ENCODE measurements at regions of chr11 and their contacts with region 1.

Region 1: GRCh38 chr11:126303623-126304456 is at the start of gene DCPS:
- DNase-seq: peak; percentile 50 to 97
- H3K4me3 ChIP-seq: peak within 1 kb of the TSS; percentile 63 to 98 (median 86)
- H3K27ac ChIP-seq: peak within 1 kb of the TSS; percentile 97
- H3K4me1 ChIP-seq: peaks cover 0 to 5% (median 2%) of the 10 kb centered on the region in 4 experiments; a peak in 4 of 7 replicates
- H3K27me3 ChIP-seq: no peaks in the 10 kb centered on the region
- CTCF ChIP-seq: no peak
- EP300 ChIP-seq: peak in 1 of 2 experiments; percentile 62; a peak in 1 of 3 replicates
- POLR2A ChIP-seq: peak; percentile 93 to 99
- RAD21 ChIP-seq: no peak
- total RNA-seq, gene DCPS: 24.6 and 24.8 TPM in 2 replicates

Region 2: DNA sequence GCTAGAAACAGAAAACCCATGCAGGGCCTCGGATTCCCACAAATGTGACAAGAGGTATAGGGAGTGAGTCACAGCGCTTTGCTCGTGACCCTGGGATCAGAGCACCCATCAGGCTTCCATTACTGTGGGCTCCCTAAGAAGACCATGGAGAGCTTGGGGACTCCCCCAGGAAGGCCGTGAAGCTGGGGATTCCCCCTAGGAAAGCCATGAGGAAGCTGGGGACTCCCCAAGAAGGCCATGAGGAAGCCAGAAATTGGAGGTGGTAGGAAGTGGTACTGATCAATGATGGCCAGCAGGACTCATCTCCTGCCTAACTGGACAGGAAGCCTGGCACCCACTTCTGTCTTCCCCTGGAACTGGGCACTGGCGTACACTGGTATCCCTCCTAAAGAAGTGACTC is 10.1 kb before region 1 on chr11:
- CTCF ChIA-PET with region 1: interaction called, 9 read pairs
- POLR2A ChIA-PET with region 1: interaction called, 23 read pairs
- DNase-seq: no peak
- H3K4me3 ChIP-seq: no peak overlapping the region
- H3K27ac ChIP-seq: no peak overlapping the region
- H3K4me1 ChIP-seq: no peaks in the 10 kb centered on the region
- H3K27me3 ChIP-seq: no peaks in the 10 kb centered on the region
- CTCF ChIP-seq: no peak
- EP300 ChIP-seq: no peak
- POLR2A ChIP-seq: no peak
- RAD21 ChIP-seq: no peak